Mammary epithelial cell (primary cell): ENCODE measurements at regions of chr22 and their contacts with region 1.

Region 1: DNA sequence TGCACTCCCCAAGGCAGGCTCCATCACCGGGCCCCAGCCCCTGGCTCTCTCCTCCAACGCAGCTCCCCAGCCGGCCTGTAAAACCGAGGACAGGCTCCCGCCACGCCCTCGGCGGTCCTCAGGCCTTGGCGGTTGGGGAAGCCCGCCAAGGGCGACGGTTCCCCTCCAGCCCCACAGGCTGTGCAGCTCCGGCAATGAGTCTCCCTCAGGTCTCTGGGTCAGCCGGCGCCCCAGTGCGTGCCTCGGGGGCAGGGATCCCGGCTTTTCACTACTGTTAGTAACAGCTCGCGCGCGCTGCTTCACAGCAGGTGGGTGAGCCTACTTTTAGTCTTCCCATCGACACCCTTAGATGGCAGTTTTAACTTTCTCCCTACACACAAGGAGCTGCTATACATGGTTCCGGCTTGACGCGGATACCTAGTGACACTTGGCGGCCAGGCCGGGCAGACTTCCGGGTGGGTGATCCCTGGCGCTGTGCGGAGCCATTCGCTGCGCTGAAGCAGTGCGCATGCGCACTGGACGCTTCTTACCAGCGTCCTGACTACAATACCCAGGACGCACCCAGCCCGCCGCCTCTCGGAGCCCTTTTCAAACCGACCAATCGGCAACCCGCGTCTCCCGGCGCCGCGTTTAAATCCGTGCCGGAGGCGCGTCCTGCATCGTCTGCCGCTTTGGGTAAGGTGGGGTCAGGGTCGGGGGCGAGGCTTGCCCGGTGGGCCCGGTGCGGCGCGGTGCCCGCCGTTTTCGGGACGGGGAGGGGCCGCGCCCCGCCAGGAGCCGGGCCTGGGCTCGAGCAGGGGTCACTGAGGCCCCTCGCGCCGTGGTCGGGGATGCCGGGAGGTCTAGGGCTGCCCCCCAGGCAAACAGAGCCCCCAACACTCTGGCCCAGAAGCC is at the start of gene GTSE1:
- DNase-seq: peak; percentile 95
- H3K4me3 ChIP-seq: peak within 1 kb of the TSS; percentile 56 to 72 (median 72)
- H3K27ac ChIP-seq: peak within 1 kb of the TSS; percentile 53
- H3K4me1 ChIP-seq: peaks cover 15% of the 10 kb centered on the region
- H3K27me3 ChIP-seq: no peaks in the 10 kb centered on the region
- CTCF ChIP-seq: peak in 1 of 2 donors; percentile 28
- total RNA-seq, gene GTSE1: 0.67 to 22.3 TPM

Region 2: GRCh38 chr22:46122511-46122971 is 174.0 kb before region 1 on chr22:
- CTCF ChIA-PET with region 1: interaction called, 5 read pairs
- dilution Hi-C with region 1: no loop called
- in situ Hi-C with region 1: loop called in 1 of 2 experiments (anchors 5 kb)
- intact Hi-C with region 1: loop called (anchors 1 kb)
- DNase-seq: no peak
- H3K4me3 ChIP-seq: no peak overlapping the region
- H3K27ac ChIP-seq: no peak overlapping the region
- H3K4me1 ChIP-seq: peaks cover 11% of the 10 kb centered on the region
- H3K27me3 ChIP-seq: no peaks in the 10 kb centered on the region
- CTCF ChIP-seq: peak; percentile 68 to 86

Region 3: GRCh38 chr22:46250035-46250782 is 46.3 kb before region 1 on chr22 and contains the start of gene CDPF1:
- CTCF ChIA-PET with region 1: no interaction called
- dilution Hi-C with region 1: loop called (anchors 10 kb)
- in situ Hi-C with region 1: no loop called
- intact Hi-C with region 1: loop called (anchors 5 kb)
- DNase-seq: peak; percentile 87
- H3K4me3 ChIP-seq: peak within 1 kb of the TSS; percentile 73 to 98 (median 89)
- H3K27ac ChIP-seq: peak within 1 kb of the TSS; percentile 36
- H3K4me1 ChIP-seq: peaks cover 9% of the 10 kb centered on the region
- H3K27me3 ChIP-seq: no peaks in the 10 kb centered on the region
- CTCF ChIP-seq: peak in 1 of 2 donors; percentile 18
- total RNA-seq, gene CDPF1: 5.7 to 8.0 TPM

Region 4: GRCh38 chr22:46256358-46256958 is 40.0 kb before region 1 on chr22:
- CTCF ChIA-PET with region 1: no interaction called
- dilution Hi-C with region 1: no loop called
- in situ Hi-C with region 1: no loop called
- intact Hi-C with region 1: loop called (anchors 5 kb)
- DNase-seq: no peak
- H3K4me3 ChIP-seq: no peak overlapping the region
- H3K27ac ChIP-seq: no peak overlapping the region
- H3K4me1 ChIP-seq: no peaks in the 10 kb centered on the region
- H3K27me3 ChIP-seq: peaks cover 3% of the 10 kb centered on the region
- CTCF ChIP-seq: no peak